Activated CD4-positive, alpha-beta T cell treated with anti-CD3 and anti-CD28 coated beads for 36 hours (primary cell): ENCODE measurements at regions of chr2 and their contacts with region 1.

Region 1: GRCh38 chr2:171025214-171025613 is 96.2 kb downstream of the GORASP2 start:
- DNase-seq: no peak
- ATAC-seq: no peak
- H3K4me3 Mint-ChIP-seq: no peak overlapping the region
- H3K27ac Mint-ChIP-seq: no peak overlapping the region
- H3K4me1 Mint-ChIP-seq: peaks cover 23% of the 10 kb centered on the region
- H3K27me3 Mint-ChIP-seq: no peaks in the 10 kb centered on the region

Region 2: DNA sequence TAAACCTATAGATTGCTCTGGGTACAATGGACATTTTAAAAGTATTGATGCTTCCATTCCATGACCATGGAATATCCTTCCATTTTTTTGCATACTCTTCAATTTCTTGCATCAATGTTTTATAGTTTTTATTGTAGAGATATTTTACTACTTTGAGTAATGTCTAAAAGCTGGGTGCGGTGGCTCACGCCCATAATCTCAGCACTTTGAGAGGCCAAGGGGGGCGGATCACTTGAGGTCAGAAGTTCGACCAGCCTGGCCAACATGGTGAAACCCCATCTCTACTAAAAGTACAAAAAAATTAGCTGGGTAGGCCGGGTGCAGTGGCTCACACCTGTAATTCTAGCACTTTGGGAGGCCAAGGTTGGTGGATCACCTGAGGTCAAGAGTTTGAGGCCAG is 47.0 kb after region 1 on chr2:
- CTCF ChIA-PET with region 1: no interaction called
- POLR2A ChIA-PET with region 1: no interaction called
- intact Hi-C with region 1: loop called in 1 of 2 experiments (anchors 5 kb)
- DNase-seq: no peak
- ATAC-seq: no peak
- H3K4me3 Mint-ChIP-seq: no peak overlapping the region
- H3K27ac Mint-ChIP-seq: no peak overlapping the region
- H3K4me1 Mint-ChIP-seq: peaks cover 20% of the 10 kb centered on the region
- H3K27me3 Mint-ChIP-seq: no peaks in the 10 kb centered on the region